ENCODE measurements at regions of chr14 and their contacts with region 1.

Region 1: GRCh38 chr14:65412032-65412846 is at the start of gene FUT8:
- DNase-seq: peak; percentile 96
- total RNA-seq, gene FUT8: 12.5 TPM

Region 2: DNA sequence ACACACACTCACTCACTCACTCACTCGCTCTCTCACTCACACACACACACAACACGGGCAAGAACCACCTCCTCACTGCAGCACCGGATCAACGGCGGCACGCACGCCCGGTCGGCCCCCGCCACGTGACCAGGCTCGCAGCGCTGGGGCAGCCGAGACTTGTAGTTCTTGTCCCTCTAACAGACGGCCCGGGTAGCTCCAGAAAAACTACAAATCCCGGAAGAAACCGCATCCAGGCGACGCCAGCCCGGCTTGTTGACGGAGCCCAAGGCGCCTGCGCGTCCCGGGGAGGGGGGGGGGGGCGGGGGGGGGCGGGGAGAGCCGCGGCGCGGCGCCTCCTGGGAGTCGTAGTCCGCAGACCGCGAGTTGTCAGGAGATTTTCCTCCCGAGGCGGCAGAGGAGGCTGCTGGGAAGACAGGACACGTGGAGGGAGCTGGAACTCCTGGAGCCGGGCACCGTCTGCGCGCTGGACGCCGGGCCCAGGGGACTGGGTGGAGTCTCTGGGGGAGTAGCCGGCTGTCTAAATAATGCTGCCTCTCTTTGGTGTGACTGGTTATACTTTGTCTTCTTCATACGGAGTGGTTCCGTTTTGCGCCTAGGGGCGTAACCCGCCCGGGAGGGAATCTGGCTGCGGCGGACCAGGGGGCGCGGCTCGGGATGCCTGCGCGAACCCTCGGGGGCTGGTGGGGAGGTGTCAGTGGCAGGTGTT is 309.6 kb before region 1 on chr14 and contains the start of gene MAX:
- intact Hi-C with region 1: loop called (anchors 5 kb)
- DNase-seq: peak; percentile 100
- total RNA-seq, gene MAX: 80.8 TPM

Region 3: DNA sequence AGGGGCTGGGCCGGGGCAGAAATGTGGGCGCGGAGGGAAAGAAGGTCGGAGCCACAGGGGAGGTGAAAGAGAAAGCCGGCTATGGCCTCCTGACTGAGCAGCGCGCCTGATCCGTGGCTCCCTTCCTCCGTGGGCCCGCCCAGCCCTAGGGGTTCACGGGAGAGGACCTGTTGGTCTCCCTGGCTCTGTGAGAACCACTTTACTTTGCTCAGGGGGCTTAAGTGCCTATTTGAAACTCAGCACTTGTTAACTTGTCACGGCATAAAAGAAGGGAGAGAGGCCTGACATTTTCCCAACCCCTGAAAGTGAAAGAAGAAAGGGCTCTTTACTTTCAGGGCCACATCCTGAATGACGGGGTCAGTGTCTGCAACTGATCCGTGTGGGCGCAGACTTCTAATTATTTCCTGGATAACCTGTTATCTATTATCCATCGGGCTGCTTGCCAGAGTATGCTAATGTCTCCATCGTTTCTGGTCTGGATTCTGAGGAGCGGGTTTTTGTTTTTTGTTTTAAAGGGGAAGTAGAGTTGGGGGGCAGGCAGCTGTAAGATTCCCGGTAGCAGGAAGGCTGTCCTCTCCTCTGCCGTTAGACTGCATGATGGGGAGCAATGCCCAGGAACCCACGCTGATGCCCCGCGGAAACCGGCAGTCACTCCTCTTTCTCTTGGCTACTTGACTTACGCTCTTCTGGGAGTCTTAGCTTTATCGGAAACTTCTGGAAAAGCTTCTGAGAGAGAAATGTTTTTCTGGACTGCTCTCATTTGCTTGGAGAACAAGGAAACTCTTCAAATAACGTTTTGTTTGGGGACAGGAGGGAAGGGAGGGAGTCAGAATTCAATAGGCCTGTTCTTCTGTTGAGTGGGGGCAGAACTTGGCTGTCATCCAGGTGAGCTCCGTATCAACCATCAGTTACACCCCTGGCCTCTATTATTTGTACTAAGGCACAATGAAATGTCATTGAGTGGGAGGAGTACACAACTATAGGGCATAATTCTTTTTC is 182.2 kb before region 1 on chr14:
- intact Hi-C with region 1: loop called (anchors 2 kb)
- DNase-seq: peak; percentile 86

Region 4: DNA sequence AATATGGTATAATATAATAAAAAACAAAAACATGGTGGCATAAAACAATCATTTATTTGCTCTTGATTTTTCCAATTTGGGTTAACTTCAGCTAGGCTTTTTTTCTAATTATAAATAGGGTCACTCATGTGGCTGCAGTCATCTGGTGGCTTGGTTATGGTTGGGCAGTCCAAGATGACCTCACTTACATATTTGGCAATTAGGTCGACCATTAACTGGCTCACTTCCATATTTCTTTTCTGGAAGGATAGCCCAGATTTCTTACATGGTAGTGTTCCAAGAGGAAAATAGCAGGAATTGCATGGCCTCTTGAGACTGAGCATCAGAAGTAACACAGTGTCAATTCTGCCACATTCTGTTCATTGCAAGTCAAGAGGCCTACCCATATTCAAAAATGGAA is 153.7 kb after region 1 on chr14:
- intact Hi-C with region 1: no loop called
- DNase-seq: no peak

Region 5: DNA sequence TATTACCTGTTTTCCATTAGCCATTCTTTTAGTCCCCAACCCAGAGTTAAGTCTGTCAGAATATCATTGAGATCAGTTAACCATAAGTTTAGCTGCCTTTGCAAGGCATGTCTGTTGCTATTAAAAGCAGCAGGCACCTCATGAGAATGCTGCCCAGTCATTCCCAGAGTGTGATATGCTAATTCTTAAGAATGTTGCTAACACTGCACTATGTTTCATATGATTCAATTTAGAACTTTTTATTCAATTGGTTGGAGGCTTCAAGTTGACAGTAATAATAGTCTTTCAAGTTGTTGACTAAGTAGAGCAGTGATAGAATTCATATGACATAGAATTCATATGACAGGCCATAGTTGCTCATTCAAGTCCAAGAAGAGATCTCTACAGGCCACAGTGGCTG is 292.6 kb after region 1 on chr14:
- intact Hi-C with region 1: no loop called
- DNase-seq: no peak

Region 6: GRCh38 chr14:65824285-65824977 is 412.2 kb after region 1 on chr14:
- intact Hi-C with region 1: loop called (anchors 1 kb)
- DNase-seq: no peak

Measured in cardiac septum (tissue), 1 donor.